ENCODE measurements at regions of chr22 and their contacts with region 1.

Region 1: GRCh38 chr22:17910561-17911311 is 113.6 kb downstream of the MICAL3 start:
- DNase-seq: no peak
- ATAC-seq: no peak
- H3K4me3 ChIP-seq: no peak overlapping the region
- H3K4me3 Mint-ChIP-seq: no peak overlapping the region
- H3K27ac ChIP-seq: no peak overlapping the region
- H3K27ac Mint-ChIP-seq: no peak overlapping the region
- H3K4me1 ChIP-seq: no peaks in the 10 kb centered on the region
- H3K4me1 Mint-ChIP-seq: no peaks in the 10 kb centered on the region
- H3K27me3 ChIP-seq: no peaks in the 10 kb centered on the region
- H3K27me3 Mint-ChIP-seq: no peaks in the 10 kb centered on the region
- CTCF ChIP-seq: no peak

Region 2: GRCh38 chr22:17807578-17808360 is 103.0 kb before region 1 on chr22:
- CTCF ChIA-PET with region 1: no interaction called
- POLR2A ChIA-PET with region 1: no interaction called
- intact Hi-C with region 1: loop called in 1 of 2 experiments (anchors 10 kb)
- DNase-seq: no peak
- ATAC-seq: no peak
- H3K4me3 ChIP-seq: no peak overlapping the region
- H3K4me3 Mint-ChIP-seq: no peak overlapping the region
- H3K27ac ChIP-seq: no peak overlapping the region
- H3K27ac Mint-ChIP-seq: no peak overlapping the region
- H3K4me1 ChIP-seq: no peaks in the 10 kb centered on the region
- H3K4me1 Mint-ChIP-seq: no peaks in the 10 kb centered on the region
- H3K27me3 ChIP-seq: no peaks in the 10 kb centered on the region
- H3K27me3 Mint-ChIP-seq: no peaks in the 10 kb centered on the region
- CTCF ChIP-seq: no peak

Region 3: DNA sequence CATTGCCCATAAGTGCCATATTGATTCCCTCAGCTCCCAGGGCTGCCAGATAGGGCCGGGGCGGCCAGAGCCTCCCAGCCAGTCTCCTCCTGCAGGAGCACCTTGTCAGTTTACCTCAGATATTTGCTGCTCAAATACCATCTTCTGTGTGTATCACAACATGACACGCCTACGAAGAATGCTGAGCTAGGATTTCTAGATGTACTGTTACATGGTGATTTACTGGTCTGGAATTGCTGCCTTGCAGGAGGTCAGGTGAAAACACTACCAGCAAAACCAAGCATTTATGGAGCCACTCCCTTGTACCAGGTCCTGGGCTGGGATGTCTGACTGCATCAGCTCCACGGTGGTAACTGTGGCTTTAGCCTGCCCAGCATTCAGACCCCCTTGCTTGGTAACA is 101.8 kb after region 1 on chr22:
- CTCF ChIA-PET with region 1: no interaction called
- POLR2A ChIA-PET with region 1: no interaction called
- intact Hi-C with region 1: loop called in 1 of 2 experiments (anchors 10 kb)
- DNase-seq: no peak
- ATAC-seq: no peak
- H3K4me3 ChIP-seq: no peak overlapping the region
- H3K4me3 Mint-ChIP-seq: no peak overlapping the region
- H3K27ac ChIP-seq: no peak overlapping the region
- H3K27ac Mint-ChIP-seq: no peak overlapping the region
- H3K4me1 ChIP-seq: no peaks in the 10 kb centered on the region
- H3K4me1 Mint-ChIP-seq: no peaks in the 10 kb centered on the region
- H3K27me3 ChIP-seq: no peaks in the 10 kb centered on the region
- H3K27me3 Mint-ChIP-seq: no peaks in the 10 kb centered on the region
- CTCF ChIP-seq: no peak

Measured in CD8-positive, alpha-beta T cell (primary cell).